ENCODE measurements at regions of chr22 and their contacts with region 1.

Region 1: DNA sequence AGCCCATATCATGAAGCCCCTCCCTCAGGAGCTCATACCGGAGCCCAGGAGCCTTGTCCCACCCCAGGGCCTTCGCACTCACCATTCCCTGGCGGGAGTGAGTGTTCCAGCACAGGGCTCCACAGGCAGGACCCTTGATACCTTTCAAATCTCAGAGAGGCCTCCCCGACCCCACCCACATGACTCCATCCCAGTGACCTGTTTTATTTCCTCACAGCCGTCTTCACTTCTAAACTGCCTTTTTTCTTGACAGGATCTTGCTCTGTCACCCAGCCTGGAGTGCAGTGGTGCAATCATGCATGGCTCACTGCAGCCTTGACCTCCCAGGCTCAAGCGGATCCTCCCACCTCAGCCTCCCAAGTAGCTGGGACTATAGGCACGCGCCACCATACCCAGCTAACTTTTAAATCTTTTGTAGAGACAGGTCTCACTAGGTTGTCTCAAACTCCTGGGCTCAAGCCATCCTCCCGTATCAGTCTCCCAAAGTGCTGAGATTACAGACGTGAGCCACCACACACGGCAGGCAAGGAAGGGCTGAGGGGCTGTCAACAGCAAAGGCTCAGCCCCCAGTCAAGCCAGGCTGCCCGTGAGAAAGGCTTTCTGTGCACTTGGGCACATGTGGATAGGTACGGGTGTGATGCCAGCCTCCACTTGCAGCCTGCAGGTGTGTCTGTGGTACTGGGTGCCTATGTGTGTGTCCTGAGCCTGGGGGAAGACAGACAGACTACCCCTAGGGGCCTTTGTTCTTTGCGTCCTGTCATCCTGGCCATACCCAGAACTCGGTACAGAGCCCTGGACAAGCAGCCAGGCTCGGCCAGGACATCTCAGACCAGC is 9.3 kb downstream of the RPL3 start:
- DNase-seq: no peak

Region 2: GRCh38 chr22:39170825-39171622 is 139.1 kb before region 1 on chr22:
- intact Hi-C with region 1: loop called (anchors 1 kb)
- DNase-seq: peak; percentile 95

Region 3: GRCh38 chr22:39197396-39197977 is 112.6 kb before region 1 on chr22:
- intact Hi-C with region 1: no loop called
- DNase-seq: no peak

Region 4: DNA sequence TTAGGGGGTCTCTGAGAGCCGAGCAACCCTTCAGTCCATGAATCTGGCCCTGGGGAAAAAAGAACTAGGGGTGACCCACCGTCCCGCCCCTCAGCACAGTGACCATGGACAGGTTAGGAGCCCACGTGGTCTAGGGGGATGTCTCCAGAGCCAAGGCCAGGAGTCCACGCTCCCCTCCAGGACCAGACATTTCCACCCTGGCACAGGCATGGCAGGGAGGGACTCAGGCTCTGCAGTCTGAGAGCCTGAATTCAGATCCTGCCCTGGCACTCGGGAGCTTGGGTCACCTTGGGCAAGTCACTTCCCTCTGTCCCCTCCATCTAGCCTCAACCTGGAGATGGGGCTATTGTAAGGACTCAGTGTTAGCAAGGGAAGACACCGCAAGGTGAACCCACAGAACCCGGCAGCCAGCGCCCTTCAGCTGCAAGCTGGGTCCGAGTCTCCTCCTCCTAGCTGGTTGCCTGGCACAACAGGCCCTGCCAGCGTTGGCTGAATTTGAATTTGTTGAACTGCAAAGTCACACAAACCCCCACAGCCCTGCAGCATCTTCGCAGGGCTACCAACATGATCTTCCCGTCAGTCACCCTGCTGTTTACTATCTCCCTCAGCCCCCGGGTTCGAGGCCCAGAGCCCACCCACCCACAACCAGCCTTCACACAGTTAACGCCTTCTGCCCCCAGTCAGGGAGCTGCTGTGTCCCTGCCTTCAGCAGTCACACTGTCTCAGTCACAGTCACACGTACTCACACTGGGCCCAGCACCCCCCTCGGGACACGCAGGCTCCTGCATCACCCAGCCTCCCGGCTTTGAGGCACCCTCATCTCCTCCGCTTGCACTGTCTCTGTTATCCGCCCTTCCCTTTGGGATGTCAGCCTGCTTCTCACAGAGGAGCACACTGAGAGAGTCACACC is 64.7 kb before region 1 on chr22:
- intact Hi-C with region 1: no loop called
- DNase-seq: no peak